ENCODE measurements at regions of chr5 and their contacts with region 1.

Region 1: DNA sequence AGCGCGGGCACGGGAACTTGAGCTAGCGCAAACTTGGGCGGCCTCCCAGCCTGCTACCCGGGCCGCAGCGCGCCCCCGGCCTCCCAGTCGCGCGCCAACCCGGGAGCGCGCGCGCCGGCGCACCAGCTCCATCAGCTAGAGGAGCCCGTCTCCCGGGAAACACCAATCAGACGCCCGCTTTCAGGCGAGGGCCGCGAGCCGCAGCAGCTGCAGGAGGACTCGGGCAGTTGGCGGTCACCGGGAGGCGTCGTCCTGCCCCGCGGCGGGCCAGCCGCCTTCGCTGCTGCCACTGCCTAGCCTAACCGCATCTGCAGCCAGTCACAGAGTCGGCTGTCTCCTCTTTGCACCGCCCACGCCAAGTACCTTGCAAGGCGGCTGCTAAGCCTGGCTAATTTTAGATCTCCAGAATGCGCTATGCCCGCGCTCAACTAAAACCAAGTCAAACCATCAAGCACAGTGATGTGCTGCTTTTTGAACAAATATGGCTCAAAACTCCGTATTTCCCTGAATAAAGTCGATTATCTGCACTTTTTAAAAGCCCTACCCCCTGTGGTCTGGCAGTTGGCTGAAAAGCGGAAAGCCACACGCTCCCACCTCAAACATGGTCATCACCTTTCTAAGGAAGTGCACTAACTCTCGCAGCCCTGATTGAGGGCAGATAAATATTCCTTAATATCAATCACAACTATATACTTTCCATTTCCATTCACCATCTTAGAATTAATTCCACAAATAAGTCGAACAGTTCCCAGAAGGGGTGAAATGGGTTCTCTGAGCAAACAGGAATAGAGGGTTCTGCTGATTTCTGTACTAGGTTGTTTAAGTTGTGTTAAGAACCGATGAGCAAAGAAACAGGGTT is 221.8 kb downstream of the MEF2C start:
- DNase-seq: peak; percentile 90
- H3K4me3 ChIP-seq: peak overlapping the region; percentile 49
- CTCF ChIP-seq: no peak

Region 2: GRCh38 chr5:88388476-88389337 is 272.5 kb before region 1 on chr5:
- in situ Hi-C with region 1: loop called (anchors 5 kb)
- DNase-seq: no peak
- H3K4me3 ChIP-seq: no peak overlapping the region
- CTCF ChIP-seq: no peak

Measured in astrocyte of the cerebellum (primary cell).